ENCODE measurements at regions of chr3 and their contacts with region 1.

Region 1: GRCh38 chr3:172710664-172711453 is at the start of gene NCEH1:
- DNase-seq: peak; percentile 99
- ATAC-seq: peak; percentile 98
- H3K4me3 ChIP-seq: peak within 1 kb of the TSS; percentile 81 to 94
- H3K27ac ChIP-seq: peak within 1 kb of the TSS; percentile 96
- H3K4me1 ChIP-seq: peaks cover 38% of the 10 kb centered on the region
- H3K27me3 ChIP-seq: no peaks in the 10 kb centered on the region
- CTCF ChIP-seq: peak; percentile 98
- total RNA-seq, gene NCEH1: 73.0 TPM

Region 2: GRCh38 chr3:172673210-172673679 is 37.6 kb before region 1 on chr3:
- CTCF ChIA-PET with region 1: interaction called, 11 read pairs
- POLR2A ChIA-PET with region 1: no interaction called
- in situ Hi-C with region 1: no loop called
- intact Hi-C with region 1: loop called (anchors 2 kb)
- DNase-seq: peak; percentile 68
- ATAC-seq: peak; percentile 93
- H3K4me3 ChIP-seq: no peak overlapping the region
- H3K27ac ChIP-seq: peak overlapping the region; percentile 79
- H3K4me1 ChIP-seq: peaks cover 27% of the 10 kb centered on the region
- H3K27me3 ChIP-seq: no peaks in the 10 kb centered on the region
- CTCF ChIP-seq: peak; percentile 95

Region 3: DNA sequence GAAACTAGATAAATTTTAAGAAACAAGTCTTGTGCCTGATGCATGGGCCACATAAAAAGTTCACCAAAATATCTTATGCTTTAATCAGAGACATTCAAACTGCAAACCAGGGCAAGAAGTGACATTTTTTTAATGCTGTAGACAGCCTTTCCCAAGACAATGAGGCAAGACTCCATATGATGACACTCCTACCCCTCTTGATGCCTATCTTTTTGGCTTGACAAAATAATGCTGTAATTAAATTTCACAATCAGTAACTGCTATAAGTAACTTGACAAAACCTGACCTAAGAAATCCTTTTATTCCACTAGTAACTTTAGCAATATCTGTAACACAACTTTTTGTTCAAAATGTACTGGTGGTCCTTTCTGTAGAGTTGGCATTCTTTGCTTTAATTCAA is 88.4 kb after region 1 on chr3:
- CTCF ChIA-PET with region 1: no interaction called
- POLR2A ChIA-PET with region 1: no interaction called
- in situ Hi-C with region 1: no loop called
- intact Hi-C with region 1: no loop called
- DNase-seq: no peak
- ATAC-seq: no peak
- H3K4me3 ChIP-seq: no peak overlapping the region
- H3K27ac ChIP-seq: no peak overlapping the region
- H3K4me1 ChIP-seq: no peaks in the 10 kb centered on the region
- H3K27me3 ChIP-seq: no peaks in the 10 kb centered on the region
- CTCF ChIP-seq: no peak

Measured in Panc1 (cell line).